ENCODE measurements at regions of chr12 and their contacts with region 1.

Region 1: GRCh38 chr12:65121049-65121955 is at the start of gene WIF1:
- DNase-seq: no peak
- H3K4me3 ChIP-seq: no peak within 1 kb of the TSS
- H3K27ac ChIP-seq: no peak within 1 kb of the TSS
- H3K4me1 ChIP-seq: no peaks in the 10 kb centered on the region
- H3K27me3 ChIP-seq: peaks cover 0 to 24% of the 10 kb centered on the region in 2 donors
- CTCF ChIP-seq: no peak
- POLR2A ChIP-seq: no peak
- total RNA-seq, gene WIF1: 7.7 TPM in 1 of 4 donors, not detected in the others

Region 2: GRCh38 chr12:64877363-64878004 is 243.8 kb before region 1 on chr12:
- intact Hi-C with region 1: no loop called
- DNase-seq: no peak
- H3K4me3 ChIP-seq: no peak overlapping the region
- H3K27ac ChIP-seq: no peak overlapping the region
- H3K4me1 ChIP-seq: no peaks in the 10 kb centered on the region
- H3K27me3 ChIP-seq: no peaks in the 10 kb centered on the region
- CTCF ChIP-seq: no peak
- POLR2A ChIP-seq: no peak

Region 3: GRCh38 chr12:64890873-64891468 is 230.3 kb before region 1 on chr12:
- intact Hi-C with region 1: loop called (anchors 5 kb)
- DNase-seq: no peak
- H3K4me3 ChIP-seq: no peak overlapping the region
- H3K27ac ChIP-seq: no peak overlapping the region
- H3K4me1 ChIP-seq: no peaks in the 10 kb centered on the region
- H3K27me3 ChIP-seq: no peaks in the 10 kb centered on the region
- CTCF ChIP-seq: peak; percentile 78 to 90 (median 84)
- POLR2A ChIP-seq: no peak

Region 4: DNA sequence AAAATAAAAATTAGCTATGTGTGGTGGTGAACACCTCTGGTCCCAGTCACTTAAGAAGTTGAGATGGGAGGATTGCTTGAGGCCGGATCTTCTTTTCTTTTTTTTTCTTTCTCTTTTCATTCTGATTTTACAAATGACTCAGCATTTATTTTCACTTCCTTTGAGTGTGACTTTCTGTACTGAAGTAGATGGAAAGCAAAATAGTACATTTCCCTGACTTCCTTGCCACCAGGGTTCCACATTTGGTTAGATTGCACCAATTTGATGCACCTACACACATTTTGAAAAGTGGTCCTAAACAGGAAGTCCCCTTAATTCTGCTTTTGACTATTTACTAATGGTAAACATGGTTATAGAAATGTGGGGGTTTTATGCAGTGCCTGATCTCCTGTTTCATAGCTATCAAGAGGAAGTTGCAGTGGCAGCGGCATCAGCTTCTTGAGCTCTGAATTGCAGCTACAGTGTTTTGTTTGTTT is 35.1 kb after region 1 on chr12:
- intact Hi-C with region 1: no loop called
- DNase-seq: no peak
- H3K4me3 ChIP-seq: no peak overlapping the region
- H3K27ac ChIP-seq: no peak overlapping the region
- H3K4me1 ChIP-seq: no peaks in the 10 kb centered on the region
- H3K27me3 ChIP-seq: no peaks in the 10 kb centered on the region
- CTCF ChIP-seq: no peak
- POLR2A ChIP-seq: no peak

Measured in uterus (tissue), 4 donors.